Right ventricle myocardium inferior (tissue), 1 donor: ENCODE measurements at regions of chr4 and their contacts with region 1.

Region 1: DNA sequence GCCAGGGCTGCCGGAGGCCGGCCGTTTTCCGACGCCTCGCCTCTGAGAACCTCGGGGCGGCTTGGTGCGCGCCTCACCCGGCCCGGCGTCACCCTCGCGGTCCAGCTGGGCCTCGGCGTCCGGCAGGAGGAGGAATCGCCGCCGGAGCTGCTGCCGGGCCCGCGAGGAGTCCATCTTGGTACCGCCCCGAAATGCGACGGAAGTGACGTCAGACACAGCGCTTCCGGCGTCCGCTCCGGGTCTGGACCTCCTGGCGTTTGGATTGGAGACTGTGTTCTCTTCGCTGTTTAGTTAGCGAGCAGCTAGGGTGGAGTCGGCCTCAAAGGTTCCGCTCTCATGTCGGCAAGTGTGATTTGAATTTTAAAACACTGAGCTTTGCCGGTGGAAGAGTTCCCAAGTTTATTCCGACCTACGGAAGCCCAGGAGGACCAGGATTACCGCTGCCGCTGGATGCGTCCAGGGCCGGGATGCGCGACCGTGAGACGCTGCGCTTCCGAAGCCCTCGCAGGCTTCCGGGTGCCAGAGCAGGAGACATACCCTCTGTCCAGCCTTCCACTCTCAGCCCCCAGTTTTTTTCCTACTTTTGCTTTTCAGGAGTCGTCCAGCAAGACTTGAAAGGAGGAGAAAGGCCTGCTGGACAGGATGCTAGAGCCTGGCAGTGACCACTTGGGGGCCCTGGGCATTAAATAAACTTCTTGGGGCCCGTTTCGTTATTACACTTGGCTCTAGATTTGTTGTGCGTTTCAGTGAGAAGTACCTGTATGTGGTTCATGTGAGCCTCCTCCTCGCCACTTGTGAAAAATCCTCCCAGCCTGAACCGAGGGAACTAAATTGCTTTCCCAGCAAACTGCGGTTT is at the start of gene TMEM128:
- DNase-seq: peak; percentile 96
- ATAC-seq: peak; percentile 97
- total RNA-seq, gene TMEM128: 10.0 TPM

Region 2: GRCh38 chr4:4289941-4290850 is 41.9 kb after region 1 on chr4 and contains the starts of genes LYAR and ZBTB49:
- intact Hi-C with region 1: loop called (anchors 1 kb)
- DNase-seq: peak; percentile 96
- ATAC-seq: peak; percentile 97
- total RNA-seq, gene LYAR: 11.3 TPM
- total RNA-seq, gene ZBTB49: 4.0 TPM

Region 3: DNA sequence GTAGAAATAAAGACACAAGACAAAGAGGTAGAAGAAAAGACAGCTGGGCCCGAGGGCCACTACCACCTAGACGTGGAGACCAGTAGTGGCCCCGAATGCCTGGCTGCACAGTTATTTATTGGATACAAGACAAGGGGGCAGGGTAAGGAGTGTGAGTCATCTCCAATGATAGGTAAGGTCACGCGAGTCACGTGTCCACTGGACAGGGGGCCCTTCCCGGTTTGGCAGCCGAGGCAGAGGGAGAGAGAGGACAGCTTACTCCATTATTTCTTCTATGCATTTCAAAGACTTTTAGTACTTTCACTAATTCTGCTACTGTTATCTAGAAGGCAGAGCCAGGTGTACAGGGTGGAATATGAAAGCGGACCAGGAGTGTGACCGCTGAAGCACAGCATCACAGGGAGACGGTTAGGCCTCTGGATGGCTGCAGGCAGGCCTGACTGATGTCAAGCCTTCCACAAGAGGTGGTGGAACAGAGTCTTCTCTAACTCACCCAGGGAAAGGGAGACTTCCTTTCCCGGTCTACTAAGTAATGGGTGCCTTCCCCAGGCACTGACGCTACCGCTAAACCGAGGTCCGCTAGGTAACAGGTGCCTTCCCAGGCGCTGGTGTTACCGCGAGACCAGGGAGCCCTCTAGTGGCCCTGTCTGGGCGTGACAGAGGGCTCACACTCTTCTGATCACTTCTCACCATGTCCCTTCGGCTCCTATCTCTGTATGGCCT is 86.7 kb after region 1 on chr4:
- intact Hi-C with region 1: loop called (anchors 2 kb)
- DNase-seq: no peak
- ATAC-seq: no peak